Endothelial cell of umbilical vein (primary cell): ENCODE measurements at regions of chr10 and their contacts with region 1.

Region 1: DNA sequence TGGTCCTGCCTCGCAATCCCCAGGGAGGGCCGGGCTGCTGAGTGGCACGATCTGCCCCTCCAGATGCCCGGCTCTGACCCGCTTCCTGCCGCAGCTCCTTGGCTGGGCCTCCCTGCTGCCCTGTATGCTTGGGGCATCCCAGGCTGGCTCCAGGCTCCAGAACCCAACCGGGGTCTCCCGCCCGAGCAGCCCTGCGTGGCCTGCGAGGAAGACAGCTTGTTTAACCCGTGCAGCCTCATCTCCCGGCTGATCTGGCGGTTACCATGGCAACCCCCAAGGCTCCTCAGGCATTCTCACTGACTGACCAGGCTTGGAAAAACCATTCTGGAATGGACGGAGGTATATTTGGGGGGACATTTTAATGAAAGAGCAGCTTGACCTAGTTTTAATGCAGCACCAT is 232.4 kb upstream of the MYO3A start:
- DNase-seq: no peak
- H3K4me3 ChIP-seq: no peak overlapping the region
- H3K27ac ChIP-seq: no peak overlapping the region
- H3K4me1 ChIP-seq: no peaks in the 10 kb centered on the region
- H3K27me3 ChIP-seq: no peaks in the 10 kb centered on the region
- CTCF ChIP-seq: no peak
- POLR2A ChIP-seq: no peak

Region 2: GRCh38 chr10:25689346-25690100 is 12.1 kb before region 1 on chr10:
- CTCF ChIA-PET with region 1: interaction called, 15 read pairs
- POLR2A ChIA-PET with region 1: no interaction called
- dilution Hi-C with region 1: no loop called
- intact Hi-C with region 1: no loop called
- DNase-seq: no peak
- H3K4me3 ChIP-seq: no peak overlapping the region
- H3K27ac ChIP-seq: no peak overlapping the region
- H3K4me1 ChIP-seq: no peaks in the 10 kb centered on the region
- H3K27me3 ChIP-seq: no peaks in the 10 kb centered on the region
- CTCF ChIP-seq: no peak
- POLR2A ChIP-seq: no peak

Region 3: GRCh38 chr10:25725918-25726716 is 24.5 kb after region 1 on chr10:
- CTCF ChIA-PET with region 1: interaction called, 11 read pairs
- POLR2A ChIA-PET with region 1: no interaction called
- dilution Hi-C with region 1: no loop called
- intact Hi-C with region 1: no loop called
- DNase-seq: peak; percentile 42
- H3K4me3 ChIP-seq: no peak overlapping the region
- H3K27ac ChIP-seq: no peak overlapping the region
- H3K4me1 ChIP-seq: no peaks in the 10 kb centered on the region
- H3K27me3 ChIP-seq: no peaks in the 10 kb centered on the region
- CTCF ChIP-seq: peak; percentile 61 to 67
- POLR2A ChIP-seq: no peak